T-cell (primary cell): ENCODE measurements at regions of chr3 and their contacts with region 1.

Region 1: DNA sequence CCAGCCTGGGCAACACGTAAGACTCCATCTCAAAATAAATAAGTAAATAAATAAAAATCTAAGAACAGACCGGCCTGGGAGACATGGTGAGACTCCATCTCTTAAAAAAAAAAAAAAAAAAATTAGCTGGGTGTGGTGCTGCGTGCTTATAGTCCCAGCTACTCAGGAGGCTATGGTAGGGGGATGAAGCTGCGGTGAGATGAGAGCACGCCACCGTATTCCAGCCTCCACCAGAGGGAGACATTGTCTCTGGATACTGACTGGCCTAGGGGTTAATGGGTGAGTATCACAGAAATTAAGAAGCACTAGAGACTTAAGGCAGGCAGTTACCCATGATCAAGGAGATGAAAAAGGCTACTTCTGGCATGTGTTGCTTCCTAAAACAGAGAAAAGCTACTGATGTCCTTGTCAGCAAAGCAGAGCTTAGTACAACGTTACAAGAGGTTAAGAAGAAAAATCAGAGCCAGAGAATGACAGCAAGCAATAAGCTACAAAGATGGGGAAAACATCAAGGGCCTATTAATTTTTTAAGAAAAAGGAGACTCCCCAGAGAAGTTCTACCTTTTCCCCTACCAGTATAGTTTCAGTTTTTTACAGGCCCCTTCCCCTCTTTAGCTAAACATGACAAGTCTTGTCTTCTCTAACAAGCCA is 8.6 kb downstream of the TFRC start:
- DNase-seq: peak; percentile 35 to 90 (median 64)
- ATAC-seq: peak; percentile 91 to 99 (median 97)
- H3K4me3 ChIP-seq: no peak overlapping the region
- H3K4me3 Mint-ChIP-seq: no peak overlapping the region
- H3K27ac ChIP-seq: no peak overlapping the region
- H3K27ac Mint-ChIP-seq: peak overlapping the region; percentile 47 to 53
- H3K4me1 ChIP-seq: peaks cover 0 to 4% of the 10 kb centered on the region in 2 experiments
- H3K4me1 Mint-ChIP-seq: peaks cover 15 to 26% (median 26%) of the 10 kb centered on the region in 3 donors
- H3K27me3 ChIP-seq: no peaks in the 10 kb centered on the region
- H3K27me3 Mint-ChIP-seq: no peaks in the 10 kb centered on the region

Region 2: GRCh38 chr3:194486540-194487288 is 1586.6 kb before region 1 on chr3 and contains the start of gene ATP13A3:
- CTCF ChIA-PET with region 1: no interaction called
- POLR2A ChIA-PET with region 1: no interaction called
- DNase-seq: peak; percentile 80 to 95 (median 89)
- ATAC-seq: peak; percentile 83 to 88 (median 86)
- H3K4me3 ChIP-seq: peak within 1 kb of the TSS; percentile 78 to 82
- H3K4me3 Mint-ChIP-seq: peak within 1 kb of the TSS; percentile 76 to 92 (median 89)
- H3K27ac ChIP-seq: peak within 1 kb of the TSS; percentile 82
- H3K27ac Mint-ChIP-seq: peak within 1 kb of the TSS; percentile 81 to 90
- H3K4me1 ChIP-seq: peaks cover 5 to 32% of the 10 kb centered on the region in 2 experiments
- H3K4me1 Mint-ChIP-seq: peaks cover 48 to 58% (median 50%) of the 10 kb centered on the region in 3 donors
- H3K27me3 ChIP-seq: no peaks in the 10 kb centered on the region
- H3K27me3 Mint-ChIP-seq: no peaks in the 10 kb centered on the region
- total RNA-seq, gene ATP13A3: 48.1 to 71.7 (median 52.0) TPM

Region 3: DNA sequence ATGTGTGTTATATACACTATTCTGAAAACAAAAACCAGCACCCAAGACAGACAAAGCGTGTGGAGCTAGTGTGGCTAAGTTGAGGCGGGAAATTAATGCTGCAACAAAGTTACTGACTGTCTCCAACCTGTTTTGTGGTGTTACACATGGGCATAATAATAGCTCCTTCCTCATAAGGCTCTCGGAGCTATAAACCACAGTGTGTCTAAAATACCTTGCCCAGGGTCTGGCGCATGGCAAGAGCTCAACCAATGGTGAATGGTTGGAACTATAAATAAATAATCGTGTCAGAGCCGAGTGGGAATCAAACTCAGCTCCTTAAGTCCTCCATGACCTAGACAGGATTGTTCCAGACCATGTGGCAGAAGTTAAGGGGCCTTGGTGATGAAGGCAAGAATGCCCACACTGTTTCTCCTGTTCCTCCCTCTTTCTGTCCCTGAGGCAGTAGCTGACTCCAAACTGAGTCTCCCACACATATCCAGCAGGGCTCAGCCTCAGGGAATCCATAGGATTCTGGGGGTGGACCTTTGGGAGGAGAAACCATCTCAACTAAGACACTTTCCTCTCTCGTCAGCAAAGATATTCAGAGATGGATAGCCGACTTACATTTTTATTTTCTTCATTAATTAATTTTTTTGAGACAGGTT is 44.6 kb after region 1 on chr3:
- CTCF ChIA-PET with region 1: interaction called, 4 to 10 read pairs
- POLR2A ChIA-PET with region 1: no interaction called
- DNase-seq: no peak
- ATAC-seq: no peak
- H3K4me3 ChIP-seq: no peak overlapping the region
- H3K4me3 Mint-ChIP-seq: no peak overlapping the region
- H3K27ac ChIP-seq: no peak overlapping the region
- H3K27ac Mint-ChIP-seq: peak overlapping the region in 1 of 2 donors; percentile 22
- H3K4me1 ChIP-seq: peaks cover 19 to 44% of the 10 kb centered on the region in 2 experiments
- H3K4me1 Mint-ChIP-seq: peaks cover 27 to 38% (median 29%) of the 10 kb centered on the region in 3 donors
- H3K27me3 ChIP-seq: no peaks in the 10 kb centered on the region
- H3K27me3 Mint-ChIP-seq: no peaks in the 10 kb centered on the region

Region 4: DNA sequence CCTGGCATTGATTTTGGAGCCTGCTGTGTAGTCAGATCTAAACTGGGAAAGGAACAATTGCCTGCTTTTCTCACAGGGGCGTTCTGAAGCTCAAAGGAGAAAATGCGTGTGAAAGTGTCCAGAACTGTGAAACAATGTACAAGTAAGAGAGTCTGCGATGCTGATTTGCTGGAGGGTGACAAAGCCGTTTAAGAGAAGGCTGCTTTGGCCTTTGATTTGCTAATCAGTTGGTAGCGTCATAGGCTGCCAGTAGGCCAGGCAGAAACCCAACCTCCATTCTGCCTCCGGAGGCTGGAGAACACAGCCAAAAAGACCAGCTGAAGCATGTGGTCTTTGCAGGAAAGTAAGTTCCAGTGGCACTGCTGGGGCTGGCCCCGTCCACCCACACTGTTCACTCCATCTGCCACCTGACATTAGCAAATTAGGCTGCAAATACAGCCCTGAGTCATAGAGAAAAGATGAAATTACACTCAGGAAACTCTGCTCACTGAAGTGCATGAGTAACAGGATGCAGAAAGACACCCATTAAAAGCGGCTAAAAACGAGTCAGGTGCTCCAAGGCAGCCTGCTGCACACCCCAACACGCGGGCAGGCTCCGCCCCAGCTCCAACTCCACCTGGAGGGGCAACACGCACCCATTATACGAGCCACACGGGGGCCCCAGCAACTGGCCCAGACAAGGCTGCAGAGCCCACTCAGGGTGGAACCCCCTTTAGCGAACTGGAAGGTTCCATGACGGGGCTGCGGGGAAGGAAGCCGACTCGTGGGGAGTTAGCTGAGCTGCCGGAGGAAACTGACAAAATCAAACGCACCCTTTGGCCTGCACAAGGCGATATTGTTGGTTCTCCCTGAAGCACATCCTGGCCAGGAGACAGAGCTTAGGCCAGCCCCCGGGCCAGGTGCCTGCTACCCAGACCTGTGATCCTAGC is 106.3 kb after region 1 on chr3:
- CTCF ChIA-PET with region 1: interaction called, 3 to 11 read pairs
- POLR2A ChIA-PET with region 1: interaction called in 1 of 2 experiments, 4 read pairs
- DNase-seq: peak; percentile 69 to 89 (median 81)
- ATAC-seq: peak; percentile 90 to 94 (median 92)
- H3K4me3 ChIP-seq: peak overlapping the region; percentile 34 to 54
- H3K4me3 Mint-ChIP-seq: peak overlapping the region; percentile 65 to 76 (median 75)
- H3K27ac ChIP-seq: peak overlapping the region; percentile 91
- H3K27ac Mint-ChIP-seq: peak overlapping the region; percentile 97 to 98
- H3K4me1 ChIP-seq: peaks cover 21 to 62% of the 10 kb centered on the region in 2 experiments
- H3K4me1 Mint-ChIP-seq: peaks cover 26 to 57% (median 50%) of the 10 kb centered on the region in 3 donors
- H3K27me3 ChIP-seq: no peaks in the 10 kb centered on the region
- H3K27me3 Mint-ChIP-seq: no peaks in the 10 kb centered on the region

Region 5: DNA sequence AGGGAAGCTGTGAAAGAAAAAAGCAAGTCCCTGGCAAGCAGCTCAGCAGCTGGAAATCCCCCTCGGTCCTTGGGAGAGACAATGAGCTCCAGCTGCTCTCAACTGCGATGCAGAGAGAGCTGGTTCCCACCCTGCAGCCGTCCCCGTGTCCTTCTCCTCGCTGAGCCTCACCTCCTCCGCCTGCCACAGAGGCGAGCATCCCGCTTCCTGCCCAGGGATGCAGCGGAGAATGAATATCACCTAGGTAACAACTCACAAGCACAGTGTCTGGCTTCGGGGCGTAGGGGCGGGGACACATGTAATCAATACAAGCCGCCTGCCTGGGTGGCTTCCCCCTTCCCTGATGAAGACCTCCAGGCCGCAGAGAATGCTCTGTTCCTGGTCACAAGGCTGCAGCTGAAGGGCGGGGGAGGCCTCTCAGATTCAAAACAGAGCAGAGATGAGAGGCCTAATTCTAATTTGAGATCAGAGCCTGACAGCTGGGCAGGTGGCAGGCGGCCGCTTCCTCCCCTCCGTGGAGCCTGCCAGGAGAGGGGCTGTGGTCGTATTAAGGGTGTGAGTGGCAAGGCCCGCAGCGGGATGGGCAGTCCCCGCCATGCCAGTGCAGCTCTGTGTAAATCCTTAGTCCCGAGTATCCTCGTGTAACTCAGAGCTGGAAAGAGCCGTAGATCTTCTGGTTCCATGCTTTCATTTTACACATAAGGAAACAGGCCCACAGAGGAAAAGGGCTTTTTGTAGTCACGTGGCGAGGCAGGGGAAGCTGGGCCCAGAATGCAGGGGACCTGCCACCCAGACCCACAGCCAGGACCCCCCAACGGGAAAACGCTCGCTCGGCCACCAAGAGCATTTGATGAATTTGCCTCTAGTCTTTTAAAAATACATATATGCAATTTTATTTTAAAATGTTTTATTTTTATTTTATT is 113.6 kb after region 1 on chr3:
- CTCF ChIA-PET with region 1: interaction called, 5 to 14 read pairs
- POLR2A ChIA-PET with region 1: interaction called, 3 to 4 read pairs
- DNase-seq: peak in 1 of 35 experiments; percentile 58
- ATAC-seq: peak; percentile 29 to 56 (median 34)
- H3K4me3 ChIP-seq: peak overlapping the region in 1 of 2 donors; percentile 3
- H3K4me3 Mint-ChIP-seq: peak overlapping the region; percentile 28 to 67 (median 49)
- H3K27ac ChIP-seq: peak overlapping the region; percentile 63
- H3K27ac Mint-ChIP-seq: peak overlapping the region; percentile 88
- H3K4me1 ChIP-seq: peaks cover 9 to 49% of the 10 kb centered on the region in 2 experiments
- H3K4me1 Mint-ChIP-seq: peaks cover 23 to 39% (median 29%) of the 10 kb centered on the region in 3 donors
- H3K27me3 ChIP-seq: no peaks in the 10 kb centered on the region
- H3K27me3 Mint-ChIP-seq: no peaks in the 10 kb centered on the region

Region 6: GRCh38 chr3:196192036-196192523 is 118.8 kb after region 1 on chr3:
- CTCF ChIA-PET with region 1: interaction called, 59 to 69 read pairs
- POLR2A ChIA-PET with region 1: interaction called, 4 to 11 read pairs
- DNase-seq: peak in 31 of 35 experiments; percentile 27 to 80 (median 41)
- ATAC-seq: peak; percentile 28 to 74 (median 52)
- H3K4me3 ChIP-seq: peak overlapping the region in 1 of 2 donors; percentile 5
- H3K4me3 Mint-ChIP-seq: peak overlapping the region in 2 of 3 donors; percentile 65 to 70
- H3K27ac ChIP-seq: peak overlapping the region; percentile 84
- H3K27ac Mint-ChIP-seq: peak overlapping the region; percentile 96
- H3K4me1 ChIP-seq: peaks cover 11 to 52% of the 10 kb centered on the region in 2 experiments
- H3K4me1 Mint-ChIP-seq: peaks cover 23 to 46% (median 24%) of the 10 kb centered on the region in 3 donors
- H3K27me3 ChIP-seq: no peaks in the 10 kb centered on the region
- H3K27me3 Mint-ChIP-seq: no peaks in the 10 kb centered on the region

Region 7: GRCh38 chr3:196202516-196202970 is 129.2 kb after region 1 on chr3:
- CTCF ChIA-PET with region 1: interaction called, 59 to 69 read pairs
- POLR2A ChIA-PET with region 1: no interaction called
- DNase-seq: no peak
- ATAC-seq: no peak
- H3K4me3 ChIP-seq: no peak overlapping the region
- H3K4me3 Mint-ChIP-seq: no peak overlapping the region
- H3K27ac ChIP-seq: no peak overlapping the region
- H3K27ac Mint-ChIP-seq: no peak overlapping the region
- H3K4me1 ChIP-seq: peaks cover 0 to 8% of the 10 kb centered on the region in 2 experiments
- H3K4me1 Mint-ChIP-seq: peaks cover 0 to 21% (median 5%) of the 10 kb centered on the region in 3 donors
- H3K27me3 ChIP-seq: peaks cover 0 to 3% of the 10 kb centered on the region in 2 experiments
- H3K27me3 Mint-ChIP-seq: no peaks in the 10 kb centered on the region